ENCODE measurements at regions of chr7 and their contacts with region 1.

Region 1: DNA sequence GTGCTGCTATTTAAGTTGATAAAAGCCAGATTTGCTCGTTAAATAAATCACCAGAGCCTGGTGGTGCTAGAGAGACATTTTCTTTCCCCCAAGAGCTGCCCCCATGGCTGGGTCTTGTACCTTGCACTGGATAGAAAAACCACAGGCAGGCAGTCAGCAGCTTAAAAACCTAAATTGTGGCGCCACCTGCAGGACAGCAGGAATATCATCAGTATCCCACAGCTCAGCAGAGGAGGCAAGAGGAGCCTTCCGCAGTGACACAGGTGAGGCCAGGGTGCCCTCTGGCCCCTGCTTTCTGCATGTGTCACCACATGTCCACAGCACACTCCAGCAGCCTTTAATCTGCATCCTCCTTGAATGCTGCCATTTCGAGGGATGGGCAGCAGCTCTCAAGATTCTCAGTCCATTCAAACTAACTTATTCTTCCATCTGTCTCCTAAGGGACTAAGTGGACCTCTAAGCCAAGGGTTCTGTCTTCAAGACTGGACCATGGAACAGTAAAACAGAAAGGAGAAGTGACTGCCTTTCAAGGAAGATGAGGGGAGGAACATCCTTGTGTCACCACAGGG is 4.5 kb upstream of the PLXNA4 start:
- DNase-seq: peak; percentile 31 to 86 (median 62)
- ATAC-seq: peak; percentile 48 to 81 (median 62)
- H3K4me3 ChIP-seq: no peak overlapping the region
- H3K4me3 Mint-ChIP-seq: no peak overlapping the region
- H3K27ac ChIP-seq: no peak overlapping the region
- H3K27ac Mint-ChIP-seq: peak overlapping the region in 1 of 2 donors; percentile 1
- H3K4me1 ChIP-seq: peaks cover 0 to 13% of the 10 kb centered on the region in 2 experiments
- H3K4me1 Mint-ChIP-seq: peaks cover 6 to 10% (median 10%) of the 10 kb centered on the region in 3 donors
- H3K27me3 ChIP-seq: peaks cover 2 to 28% of the 10 kb centered on the region in 2 experiments
- H3K27me3 Mint-ChIP-seq: peaks cover 29 to 42% of the 10 kb centered on the region in 2 donors

Region 2: GRCh38 chr7:131604841-131605279 is 975.9 kb before region 1 on chr7:
- CTCF ChIA-PET with region 1: no interaction called
- POLR2A ChIA-PET with region 1: no interaction called
- DNase-seq: no peak
- ATAC-seq: no peak
- H3K4me3 ChIP-seq: no peak overlapping the region
- H3K4me3 Mint-ChIP-seq: no peak overlapping the region
- H3K27ac ChIP-seq: no peak overlapping the region
- H3K27ac Mint-ChIP-seq: no peak overlapping the region
- H3K4me1 ChIP-seq: no peaks in the 10 kb centered on the region
- H3K4me1 Mint-ChIP-seq: no peaks in the 10 kb centered on the region
- H3K27me3 ChIP-seq: peaks cover 6 to 47% of the 10 kb centered on the region in 2 experiments
- H3K27me3 Mint-ChIP-seq: peaks cover 13 to 47% of the 10 kb centered on the region in 2 donors

Region 3: GRCh38 chr7:132318352-132319318 is 262.2 kb before region 1 on chr7:
- CTCF ChIA-PET with region 1: interaction called, 5 to 35 read pairs
- POLR2A ChIA-PET with region 1: interaction called in 1 of 2 experiments, 3 read pairs
- DNase-seq: peak; percentile 46 to 87 (median 65)
- ATAC-seq: peak; percentile 76 to 91 (median 84)
- H3K4me3 ChIP-seq: peak overlapping the region in 1 of 2 donors; percentile 45
- H3K4me3 Mint-ChIP-seq: peak overlapping the region; percentile 0 to 50 (median 0)
- H3K27ac ChIP-seq: no peak overlapping the region
- H3K27ac Mint-ChIP-seq: no peak overlapping the region
- H3K4me1 ChIP-seq: peaks cover 0 to 8% of the 10 kb centered on the region in 2 experiments
- H3K4me1 Mint-ChIP-seq: peaks cover 8 to 14% (median 11%) of the 10 kb centered on the region in 3 donors
- H3K27me3 ChIP-seq: peaks cover 4 to 24% of the 10 kb centered on the region in 2 experiments
- H3K27me3 Mint-ChIP-seq: peaks cover 31 to 40% of the 10 kb centered on the region in 2 donors

Region 4: GRCh38 chr7:132394283-132395198 is 186.3 kb before region 1 on chr7:
- CTCF ChIA-PET with region 1: interaction called, 47 to 50 read pairs
- POLR2A ChIA-PET with region 1: no interaction called
- DNase-seq: peak in 24 of 35 experiments; percentile 7 to 71 (median 21)
- ATAC-seq: peak in 2 of 4 experiments; percentile 65 to 68
- H3K4me3 ChIP-seq: no peak overlapping the region
- H3K4me3 Mint-ChIP-seq: no peak overlapping the region
- H3K27ac ChIP-seq: no peak overlapping the region
- H3K27ac Mint-ChIP-seq: no peak overlapping the region
- H3K4me1 ChIP-seq: peaks cover 0 to 5% of the 10 kb centered on the region in 2 experiments
- H3K4me1 Mint-ChIP-seq: peaks cover 4 to 14% (median 11%) of the 10 kb centered on the region in 3 donors
- H3K27me3 ChIP-seq: peaks cover 0 to 11% of the 10 kb centered on the region in 2 experiments
- H3K27me3 Mint-ChIP-seq: peaks cover 1 to 6% of the 10 kb centered on the region in 2 donors

Region 5: GRCh38 chr7:132666071-132666774 is 85.4 kb after region 1 on chr7:
- CTCF ChIA-PET with region 1: no interaction called
- POLR2A ChIA-PET with region 1: no interaction called
- DNase-seq: peak in 3 of 35 experiments; percentile 3 to 53 (median 6)
- ATAC-seq: peak; percentile 45 to 91 (median 72)
- H3K4me3 ChIP-seq: no peak overlapping the region
- H3K4me3 Mint-ChIP-seq: peak overlapping the region; percentile 40 to 54 (median 42)
- H3K27ac ChIP-seq: no peak overlapping the region
- H3K27ac Mint-ChIP-seq: peak overlapping the region; percentile 79 to 88
- H3K4me1 ChIP-seq: peaks cover 6 to 11% of the 10 kb centered on the region in 2 experiments
- H3K4me1 Mint-ChIP-seq: peaks cover 10 to 13% (median 11%) of the 10 kb centered on the region in 3 donors
- H3K27me3 ChIP-seq: no peaks in the 10 kb centered on the region
- H3K27me3 Mint-ChIP-seq: no peaks in the 10 kb centered on the region

Measured in T-cell (primary cell).